B cell (primary cell): ENCODE measurements at regions of chr11 and their contacts with region 1.

Region 1: DNA sequence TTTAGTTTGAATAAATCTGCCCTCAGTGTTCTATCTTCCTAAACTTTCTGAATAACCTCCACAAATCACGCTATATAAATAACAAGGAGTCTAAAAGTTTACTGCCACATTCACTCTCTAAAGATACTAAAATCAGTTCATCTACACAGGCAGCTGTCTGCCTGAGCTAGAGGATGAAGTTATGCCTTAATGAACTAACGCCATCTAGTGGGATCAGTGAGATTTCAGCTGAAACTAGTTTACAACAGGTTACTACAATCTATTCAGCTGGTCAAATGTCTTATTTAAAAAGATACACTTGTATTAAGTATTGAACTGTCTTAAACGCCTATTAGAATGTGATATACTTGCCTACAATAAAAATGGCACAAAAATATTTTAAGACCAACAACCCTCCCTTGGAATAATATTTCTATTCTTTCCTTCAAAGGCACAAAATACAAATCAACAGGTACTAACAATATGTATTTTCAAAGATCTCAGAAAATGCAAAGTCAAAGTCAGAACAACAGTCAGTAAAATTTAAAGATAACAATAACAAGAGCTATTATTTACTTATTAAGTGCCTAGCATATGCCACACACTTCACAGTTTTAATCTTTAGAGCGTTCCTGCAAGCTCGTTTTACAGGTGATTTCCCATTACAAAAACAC is 84.1 kb downstream of the LARGE2 start:
- DNase-seq: peak; percentile 79
- ATAC-seq: peak; percentile 82
- H3K4me3 ChIP-seq: no peak overlapping the region
- H3K4me3 Mint-ChIP-seq: no peak overlapping the region
- H3K27ac ChIP-seq: no peak overlapping the region
- H3K27ac Mint-ChIP-seq: no peak overlapping the region
- H3K4me1 ChIP-seq: no peaks in the 10 kb centered on the region
- H3K4me1 Mint-ChIP-seq: peaks cover 1% of the 10 kb centered on the region
- H3K27me3 ChIP-seq: no peaks in the 10 kb centered on the region
- H3K27me3 Mint-ChIP-seq: no peaks in the 10 kb centered on the region
- CTCF ChIP-seq: peak; percentile 84

Region 2: GRCh38 chr11:45872513-45873356 is 133.8 kb before region 1 on chr11:
- CTCF ChIA-PET with region 1: interaction called, 87 read pairs
- POLR2A ChIA-PET with region 1: no interaction called
- intact Hi-C with region 1: no loop called
- DNase-seq: peak; percentile 60
- ATAC-seq: peak; percentile 70
- H3K4me3 ChIP-seq: no peak overlapping the region
- H3K4me3 Mint-ChIP-seq: no peak overlapping the region
- H3K27ac ChIP-seq: no peak overlapping the region
- H3K27ac Mint-ChIP-seq: no peak overlapping the region
- H3K4me1 ChIP-seq: no peaks in the 10 kb centered on the region
- H3K4me1 Mint-ChIP-seq: no peaks in the 10 kb centered on the region
- H3K27me3 ChIP-seq: no peaks in the 10 kb centered on the region
- H3K27me3 Mint-ChIP-seq: no peaks in the 10 kb centered on the region
- CTCF ChIP-seq: peak; percentile 73

Region 3: DNA sequence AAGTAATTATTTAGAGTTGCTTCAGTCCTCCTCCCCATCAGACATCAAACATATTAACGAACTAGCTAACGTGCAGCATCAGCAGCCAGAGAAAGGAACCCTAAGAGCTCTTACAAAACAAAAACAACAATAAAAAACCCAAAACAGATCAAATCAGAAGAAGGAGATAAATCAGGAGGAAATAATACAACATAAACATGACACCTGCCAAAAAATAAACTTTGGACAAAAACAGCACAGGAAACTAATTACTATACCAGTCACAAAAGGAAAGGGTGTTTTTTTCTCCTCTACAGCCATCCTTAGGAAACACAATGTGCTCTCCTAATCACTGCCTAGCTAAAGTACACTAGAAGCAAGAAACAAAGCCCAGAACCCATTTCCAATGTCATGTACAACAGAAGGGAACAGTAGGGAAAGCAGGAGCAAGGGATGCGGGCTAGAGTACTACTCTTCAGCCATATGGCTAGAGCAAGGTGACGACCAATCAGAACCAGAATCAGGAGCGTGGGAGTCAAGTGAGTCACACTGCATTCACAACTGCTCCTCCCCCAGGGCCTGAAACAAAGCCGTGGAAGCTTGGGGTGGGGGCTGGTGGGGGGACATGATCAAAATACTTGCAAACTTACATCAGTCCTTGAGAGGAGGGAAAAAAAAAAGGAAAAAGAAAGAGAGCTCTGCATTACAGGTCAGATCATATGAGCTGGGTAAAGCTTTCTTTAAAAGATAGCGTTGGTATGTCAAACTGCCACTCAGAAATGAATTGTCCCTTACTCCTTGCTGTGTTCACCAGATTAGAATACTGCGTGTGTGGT is 23.7 kb before region 1 on chr11:
- CTCF ChIA-PET with region 1: interaction called, 12 read pairs
- POLR2A ChIA-PET with region 1: interaction called, 12 read pairs
- intact Hi-C with region 1: no loop called
- DNase-seq: no peak
- ATAC-seq: no peak
- H3K4me3 ChIP-seq: no peak overlapping the region
- H3K4me3 Mint-ChIP-seq: no peak overlapping the region
- H3K27ac ChIP-seq: no peak overlapping the region
- H3K27ac Mint-ChIP-seq: no peak overlapping the region
- H3K4me1 ChIP-seq: no peaks in the 10 kb centered on the region
- H3K4me1 Mint-ChIP-seq: peaks cover 12% of the 10 kb centered on the region
- H3K27me3 ChIP-seq: no peaks in the 10 kb centered on the region
- H3K27me3 Mint-ChIP-seq: no peaks in the 10 kb centered on the region
- CTCF ChIP-seq: no peak